Activated T-helper 1 cell treated with anti-CD3 and anti-CD28 coated beads, Interleukin-12 subunit alpha, Interleukin-12 subunit beta, Interleukin-2, Interleukin-4 antibody, amounts not matched to agents 30 ng/mL and 10 ng/mL and 1 ng/mL, durations not matched to agents 14 hours and 24 hours and 36 hours (primary cell): ENCODE measurements at regions of chr10 and their contacts with region 1.

Region 1: DNA sequence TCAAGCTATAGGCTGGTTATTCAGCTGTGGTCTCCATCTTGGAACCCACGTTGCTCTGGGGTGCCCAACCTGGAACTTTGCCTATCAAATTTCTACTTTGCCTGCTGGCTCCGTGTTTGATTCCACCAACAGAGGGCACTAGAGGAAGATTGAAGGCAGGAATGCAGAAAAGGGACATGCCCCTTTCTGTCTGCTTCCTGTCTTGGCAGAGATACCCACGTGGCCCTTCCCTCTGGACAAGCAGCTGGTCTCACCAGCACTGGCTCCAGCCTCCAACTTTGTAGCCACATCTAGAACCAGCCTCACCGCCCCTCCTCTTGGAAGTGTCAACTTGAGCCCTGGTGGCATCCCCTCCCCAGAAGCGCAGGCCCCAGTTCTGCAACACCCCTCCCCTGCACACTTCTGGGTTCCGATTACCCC is 52.1 kb upstream of the ZNF438 start:
- DNase-seq: peak; percentile 58
- H3K4me3 Mint-ChIP-seq: no peak overlapping the region
- H3K27ac Mint-ChIP-seq: peak overlapping the region; percentile 11
- H3K4me1 Mint-ChIP-seq: peaks cover 24% of the 10 kb centered on the region
- H3K27me3 Mint-ChIP-seq: peaks cover 4% of the 10 kb centered on the region

Region 2: GRCh38 chr10:31242902-31243301 is 159.1 kb after region 1 on chr10:
- intact Hi-C with region 1: loop called (anchors 5 kb)
- DNase-seq: no peak
- H3K4me3 Mint-ChIP-seq: no peak overlapping the region
- H3K27ac Mint-ChIP-seq: peak overlapping the region; percentile 18
- H3K4me1 Mint-ChIP-seq: peaks cover 14% of the 10 kb centered on the region
- H3K27me3 Mint-ChIP-seq: peaks cover 8% of the 10 kb centered on the region

Region 3: DNA sequence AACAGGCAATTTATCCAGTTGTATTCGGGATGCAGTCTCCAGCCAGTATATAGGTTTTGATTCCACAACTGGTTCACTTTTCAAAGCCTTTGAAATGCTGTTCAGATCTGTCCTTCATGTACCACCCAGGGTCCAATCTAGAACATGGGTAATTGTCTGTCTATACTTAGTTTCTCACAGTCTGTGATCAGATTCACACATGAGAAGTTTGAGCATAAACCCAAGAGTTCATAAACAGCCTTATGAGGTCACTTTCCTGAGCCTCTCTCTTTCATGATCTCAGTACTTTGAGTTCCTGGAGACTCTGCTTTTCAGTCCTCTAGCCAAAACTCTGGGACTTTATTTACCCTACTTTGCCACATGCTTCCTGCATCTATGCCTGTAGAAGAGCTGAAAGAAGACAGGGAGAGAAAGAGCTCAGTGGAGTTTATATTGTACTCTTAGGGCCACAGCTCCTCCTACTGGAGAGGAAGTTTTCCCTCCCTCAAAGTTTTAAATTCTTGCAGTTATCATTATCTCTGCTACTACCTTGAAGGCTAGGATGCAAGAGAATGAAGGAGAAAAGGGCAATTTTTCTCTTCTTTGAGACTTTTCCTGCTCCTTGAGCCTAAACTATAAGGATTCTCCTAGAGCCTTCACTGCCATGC is 407.2 kb after region 1 on chr10:
- intact Hi-C with region 1: loop called (anchors 1 kb)
- DNase-seq: no peak
- H3K4me3 Mint-ChIP-seq: no peak overlapping the region
- H3K27ac Mint-ChIP-seq: no peak overlapping the region
- H3K4me1 Mint-ChIP-seq: peaks cover 19% of the 10 kb centered on the region
- H3K27me3 Mint-ChIP-seq: no peaks in the 10 kb centered on the region

Region 4: GRCh38 chr10:32054094-32054493 is 970.3 kb after region 1 on chr10:
- intact Hi-C with region 1: no loop called
- DNase-seq: no peak
- H3K4me3 Mint-ChIP-seq: peak overlapping the region; percentile 94
- H3K27ac Mint-ChIP-seq: peak overlapping the region; percentile 92
- H3K4me1 Mint-ChIP-seq: peaks cover 60% of the 10 kb centered on the region
- H3K27me3 Mint-ChIP-seq: no peaks in the 10 kb centered on the region